ENCODE measurements at regions of chr17 and their contacts with region 1.

Region 1: DNA sequence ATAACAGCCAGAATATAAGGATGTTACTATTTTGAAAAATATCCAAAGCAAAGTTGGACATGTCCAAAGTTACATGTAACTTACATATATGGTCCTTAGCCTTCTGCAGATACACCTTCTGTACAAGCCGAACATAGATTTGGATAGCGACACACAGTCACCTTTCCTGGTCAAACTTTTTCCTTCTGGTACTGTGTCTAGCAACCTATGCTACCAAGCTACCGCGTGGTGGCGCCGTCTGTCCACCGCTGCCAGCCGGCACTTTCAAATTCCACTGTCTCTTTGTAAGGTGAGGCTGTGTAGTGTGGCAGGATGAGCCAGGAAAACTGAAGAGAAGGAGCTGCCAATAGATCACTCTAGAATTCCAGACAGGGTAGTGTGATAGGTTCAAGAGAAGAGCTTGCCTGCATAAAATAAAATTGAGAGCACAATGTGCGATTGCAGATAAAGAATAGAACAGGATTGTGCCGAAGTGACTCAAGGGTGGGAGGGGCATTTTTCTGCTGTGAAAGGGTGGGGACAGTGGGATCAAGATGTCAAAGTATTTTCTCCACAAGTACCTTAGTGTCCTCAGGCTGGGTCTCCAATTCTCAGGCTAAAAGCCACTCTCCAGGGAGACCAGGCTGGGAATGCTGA is 366.9 kb downstream of the SLC39A11 start:
- DNase-seq: peak; percentile 52
- H3K4me3 ChIP-seq: no peak overlapping the region
- H3K27ac ChIP-seq: no peak overlapping the region
- H3K4me1 ChIP-seq: no peaks in the 10 kb centered on the region
- H3K27me3 ChIP-seq: no peaks in the 10 kb centered on the region
- CTCF ChIP-seq: peak; percentile 70

Region 2: DNA sequence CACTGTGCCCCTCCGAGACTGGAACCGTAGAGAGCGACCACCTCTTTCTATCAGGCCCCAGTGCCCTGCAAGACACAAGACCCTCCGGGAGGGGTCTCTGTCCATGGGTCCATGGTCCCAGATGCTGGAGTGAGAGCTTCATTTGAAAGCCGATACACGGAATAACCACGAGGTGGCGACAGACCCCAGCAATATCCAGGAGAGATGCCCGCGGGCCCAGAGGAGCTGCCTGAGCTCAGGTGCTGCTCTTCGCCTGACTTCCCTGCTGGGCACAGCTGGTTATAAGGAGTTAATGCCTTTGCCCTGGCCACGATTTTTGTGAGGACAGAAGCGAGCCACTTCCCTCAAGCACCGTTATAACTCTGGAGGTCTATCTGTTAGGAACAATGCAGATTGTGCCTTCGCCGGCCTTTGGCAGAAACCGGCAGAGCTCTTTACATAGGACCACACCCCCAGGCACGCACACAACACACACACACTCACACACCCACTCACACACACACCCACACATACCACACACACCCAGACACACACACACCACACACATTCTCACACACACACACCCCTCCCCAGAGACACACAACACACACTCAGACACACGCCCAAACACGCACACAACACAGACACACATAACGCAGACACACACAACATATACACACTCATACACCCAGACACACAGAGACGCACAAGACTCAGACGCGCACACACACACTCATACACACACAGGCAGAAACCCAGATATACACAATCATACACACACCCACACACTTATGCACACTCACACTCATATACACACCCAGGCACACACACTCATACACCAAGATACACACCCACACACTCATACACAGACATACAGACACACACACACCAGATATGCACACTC is 168.4 kb before region 1 on chr17:
- intact Hi-C with region 1: loop called (anchors 2 kb)
- DNase-seq: peak; percentile 77
- H3K4me3 ChIP-seq: no peak overlapping the region
- H3K27ac ChIP-seq: no peak overlapping the region
- H3K4me1 ChIP-seq: peaks cover 5% of the 10 kb centered on the region
- H3K27me3 ChIP-seq: no peaks in the 10 kb centered on the region
- CTCF ChIP-seq: peak; percentile 74

Region 3: DNA sequence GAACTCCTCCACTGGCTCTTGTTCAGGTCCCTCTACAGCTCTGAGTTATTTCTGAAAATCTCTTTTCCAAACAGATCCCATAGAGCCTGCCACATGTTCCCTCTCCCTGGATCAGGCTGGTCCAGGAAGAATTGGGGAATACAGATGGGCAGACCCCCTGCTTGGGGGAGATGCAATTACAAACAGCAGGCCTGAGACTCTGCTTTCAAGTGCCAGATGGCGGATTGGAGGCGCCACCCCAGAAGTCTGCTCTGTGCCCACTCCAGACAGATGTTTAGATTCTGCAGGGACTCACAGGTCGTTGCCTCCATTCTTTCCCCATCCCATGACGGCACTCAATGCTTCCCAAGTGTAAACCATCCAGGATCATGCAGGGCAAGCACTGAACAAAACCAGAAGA is 50.4 kb after region 1 on chr17:
- intact Hi-C with region 1: no loop called
- DNase-seq: no peak
- H3K4me3 ChIP-seq: no peak overlapping the region
- H3K27ac ChIP-seq: no peak overlapping the region
- H3K4me1 ChIP-seq: no peaks in the 10 kb centered on the region
- H3K27me3 ChIP-seq: no peaks in the 10 kb centered on the region
- CTCF ChIP-seq: no peak

Region 4: GRCh38 chr17:72901083-72901482 is 175.5 kb after region 1 on chr17:
- intact Hi-C with region 1: no loop called
- DNase-seq: no peak
- H3K4me3 ChIP-seq: no peak overlapping the region
- H3K27ac ChIP-seq: no peak overlapping the region
- H3K4me1 ChIP-seq: no peaks in the 10 kb centered on the region
- H3K27me3 ChIP-seq: no peaks in the 10 kb centered on the region
- CTCF ChIP-seq: no peak

Region 5: GRCh38 chr17:72985881-72986720 is 260.6 kb after region 1 on chr17:
- intact Hi-C with region 1: loop called (anchors 5 kb)
- DNase-seq: peak; percentile 76
- H3K4me3 ChIP-seq: no peak overlapping the region
- H3K27ac ChIP-seq: no peak overlapping the region
- H3K4me1 ChIP-seq: no peaks in the 10 kb centered on the region
- H3K27me3 ChIP-seq: no peaks in the 10 kb centered on the region
- CTCF ChIP-seq: peak; percentile 87

Region 6: GRCh38 chr17:73156166-73156840 is 430.8 kb after region 1 on chr17:
- intact Hi-C with region 1: loop called (anchors 5 kb)
- DNase-seq: peak; percentile 70
- H3K4me3 ChIP-seq: no peak overlapping the region
- H3K27ac ChIP-seq: no peak overlapping the region
- H3K4me1 ChIP-seq: no peaks in the 10 kb centered on the region
- H3K27me3 ChIP-seq: no peaks in the 10 kb centered on the region
- CTCF ChIP-seq: peak; percentile 68

Region 7: GRCh38 chr17:73189417-73190099 is 464.0 kb after region 1 on chr17:
- intact Hi-C with region 1: loop called (anchors 5 kb)
- DNase-seq: no peak
- H3K4me3 ChIP-seq: no peak overlapping the region
- H3K27ac ChIP-seq: no peak overlapping the region
- H3K4me1 ChIP-seq: peaks cover 4% of the 10 kb centered on the region
- H3K27me3 ChIP-seq: no peaks in the 10 kb centered on the region
- CTCF ChIP-seq: peak; percentile 53

Region 8: DNA sequence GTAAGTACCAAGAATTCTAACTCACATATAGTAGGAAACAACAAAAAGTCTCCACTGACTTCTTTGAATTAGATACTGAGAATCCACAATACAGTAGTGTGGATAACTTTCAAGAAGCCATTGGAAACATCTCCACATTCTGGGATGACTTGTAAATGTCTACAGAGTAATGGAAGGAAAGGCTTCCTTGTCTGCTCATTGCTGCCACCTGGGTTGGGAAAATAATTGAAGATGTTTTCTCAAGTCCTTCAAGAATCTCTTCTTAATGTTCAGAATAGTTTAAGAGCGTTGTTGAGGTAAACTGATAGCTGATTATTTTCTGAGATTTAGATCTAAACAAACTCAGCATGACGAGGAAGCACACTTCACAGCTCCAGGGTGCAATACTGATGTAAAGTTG is 522.2 kb after region 1 on chr17:
- intact Hi-C with region 1: loop called (anchors 5 kb)
- DNase-seq: no peak
- H3K4me3 ChIP-seq: no peak overlapping the region
- H3K27ac ChIP-seq: no peak overlapping the region
- H3K4me1 ChIP-seq: no peaks in the 10 kb centered on the region
- H3K27me3 ChIP-seq: no peaks in the 10 kb centered on the region
- CTCF ChIP-seq: no peak

Region 9: GRCh38 chr17:73359987-73360410 is 634.4 kb after region 1 on chr17:
- intact Hi-C with region 1: loop called (anchors 10 kb)
- DNase-seq: peak; percentile 71
- H3K4me3 ChIP-seq: no peak overlapping the region
- H3K27ac ChIP-seq: no peak overlapping the region
- H3K4me1 ChIP-seq: no peaks in the 10 kb centered on the region
- H3K27me3 ChIP-seq: no peaks in the 10 kb centered on the region
- CTCF ChIP-seq: no peak